Aorta (tissue), 5 donors: ENCODE measurements at regions of chr5 and their contacts with region 1.

Region 1: DNA sequence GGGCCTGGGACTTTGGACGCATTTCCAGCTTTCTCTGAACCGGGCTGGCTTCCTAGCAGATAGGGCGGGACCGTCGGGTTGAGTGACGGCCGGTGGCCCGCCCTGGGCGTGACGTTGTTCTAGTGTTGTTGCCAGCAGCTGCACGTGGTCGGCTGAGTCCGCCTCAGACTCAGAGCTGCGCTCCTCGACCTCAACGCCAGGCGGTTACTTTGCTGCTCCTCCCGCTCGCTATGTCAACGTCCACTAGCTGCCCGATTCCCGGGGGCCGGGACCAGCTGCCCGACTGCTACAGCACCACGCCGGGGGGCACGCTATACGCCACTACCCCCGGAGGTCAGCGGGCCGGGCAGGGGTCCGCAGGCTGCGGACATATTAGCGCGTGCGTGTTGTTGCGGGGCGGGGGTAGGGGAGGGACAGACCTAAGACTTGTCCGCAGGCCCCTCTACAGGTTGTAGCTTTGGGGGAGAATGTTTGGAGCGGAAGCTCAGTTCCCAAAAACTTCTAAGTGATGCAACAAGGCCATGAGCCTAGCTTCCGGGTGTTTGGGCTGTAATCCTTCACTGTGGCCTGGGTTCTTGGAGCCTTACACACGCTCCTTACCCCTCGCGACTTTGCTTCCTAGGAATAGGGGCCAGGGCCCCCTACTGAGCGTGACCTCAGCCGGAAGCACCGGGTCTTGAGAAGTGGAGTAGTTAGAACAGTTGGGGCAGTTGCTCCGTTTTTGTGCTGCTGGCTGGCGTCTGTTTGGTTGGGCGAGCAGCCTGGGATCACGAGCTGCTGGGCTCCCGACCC is at the start of gene EIF4EBP3:
- DNase-seq: peak; percentile 99
- ATAC-seq: peak; percentile 98
- H3K4me3 ChIP-seq: peak within 1 kb of the TSS; percentile 14 to 27
- H3K27ac ChIP-seq: peak within 1 kb of the TSS; percentile 65 to 83
- H3K4me1 ChIP-seq: peaks cover 0 to 4% of the 10 kb centered on the region in 2 donors
- H3K27me3 ChIP-seq: no peaks in the 10 kb centered on the region
- total RNA-seq, gene EIF4EBP3: 5.4 to 14.2 TPM

Region 2: GRCh38 chr5:140391312-140391711 is 156.4 kb before region 1 on chr5:
- intact Hi-C with region 1: no loop called
- DNase-seq: no peak
- ATAC-seq: no peak
- H3K4me3 ChIP-seq: no peak overlapping the region
- H3K27ac ChIP-seq: no peak overlapping the region
- H3K4me1 ChIP-seq: no peaks in the 10 kb centered on the region
- H3K27me3 ChIP-seq: no peaks in the 10 kb centered on the region

Region 3: GRCh38 chr5:140639148-140639979 is 91.7 kb after region 1 on chr5 and contains the start of gene TMCO6:
- intact Hi-C with region 1: loop called in 1 of 2 experiments (anchors 5 kb)
- DNase-seq: peak; percentile 99
- ATAC-seq: peak; percentile 100
- H3K4me3 ChIP-seq: peak within 1 kb of the TSS; percentile 27 to 58
- H3K27ac ChIP-seq: peak within 1 kb of the TSS in 1 of 2 donors; percentile 18
- H3K4me1 ChIP-seq: no peaks in the 10 kb centered on the region
- H3K27me3 ChIP-seq: no peaks in the 10 kb centered on the region
- total RNA-seq, gene TMCO6: 8.6 to 11.9 TPM